Vagina (tissue), 2 donors: ENCODE measurements at regions of chr10 and their contacts with region 1.

Region 1: DNA sequence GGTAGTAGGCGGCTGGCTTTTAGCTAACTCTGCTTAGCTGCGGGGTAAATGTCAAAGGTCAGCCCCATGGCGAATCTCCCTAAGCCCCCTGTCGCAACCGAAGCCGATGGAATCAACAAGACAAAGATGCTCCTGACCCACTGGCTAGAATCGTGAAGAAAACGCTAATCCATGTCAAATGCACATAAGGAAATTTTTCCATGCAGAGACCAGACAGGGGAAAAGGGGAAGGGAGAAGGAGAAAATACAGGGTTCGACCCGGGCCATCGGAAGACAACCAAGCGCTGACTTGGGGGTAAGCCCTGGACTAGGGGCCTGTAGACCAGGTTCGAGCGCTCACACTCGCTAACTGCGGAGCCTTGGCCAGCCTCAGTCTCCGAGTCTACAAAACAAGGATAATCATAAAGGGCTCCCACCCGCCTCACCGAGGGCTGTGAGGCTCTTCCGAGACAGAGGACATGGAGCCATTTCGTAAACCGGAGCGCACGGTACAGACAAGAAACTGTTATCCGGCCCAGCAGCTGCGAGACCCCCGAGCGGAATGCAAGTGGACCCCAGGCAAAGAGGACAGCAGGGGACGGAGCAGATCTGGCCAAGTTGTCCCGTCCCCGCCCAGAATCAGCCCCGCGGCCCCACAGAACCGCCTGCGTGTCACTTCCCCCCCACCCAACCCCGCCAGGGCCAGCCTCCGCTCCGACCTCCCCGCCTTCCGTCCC is 507 bp downstream of the SAR1A start:
- DNase-seq: no peak
- H3K4me3 ChIP-seq: peak overlapping the region; percentile 94 to 99
- H3K27ac ChIP-seq: peak overlapping the region; percentile 98
- H3K4me1 ChIP-seq: peaks cover 43% of the 10 kb centered on the region
- H3K27me3 ChIP-seq: no peaks in the 10 kb centered on the region
- CTCF ChIP-seq: no peak
- POLR2A ChIP-seq: no peak

Region 2: GRCh38 chr10:70146489-70147258 is 23.1 kb before region 1 on chr10 and contains the start of gene TYSND1:
- intact Hi-C with region 1: loop called (anchors 1 kb)
- DNase-seq: peak in 1 of 2 donors; percentile 99
- H3K4me3 ChIP-seq: peak within 1 kb of the TSS; percentile 76 to 89
- H3K27ac ChIP-seq: peak within 1 kb of the TSS; percentile 94
- H3K4me1 ChIP-seq: peaks cover 29% of the 10 kb centered on the region
- H3K27me3 ChIP-seq: no peaks in the 10 kb centered on the region
- CTCF ChIP-seq: peak in 1 of 3 experiments; percentile 56
- POLR2A ChIP-seq: peak in 1 of 2 donors; percentile 83
- total RNA-seq, gene TYSND1: 15.7 TPM